ENCODE measurements at regions of chr19 and their contacts with region 1.

Region 1: DNA sequence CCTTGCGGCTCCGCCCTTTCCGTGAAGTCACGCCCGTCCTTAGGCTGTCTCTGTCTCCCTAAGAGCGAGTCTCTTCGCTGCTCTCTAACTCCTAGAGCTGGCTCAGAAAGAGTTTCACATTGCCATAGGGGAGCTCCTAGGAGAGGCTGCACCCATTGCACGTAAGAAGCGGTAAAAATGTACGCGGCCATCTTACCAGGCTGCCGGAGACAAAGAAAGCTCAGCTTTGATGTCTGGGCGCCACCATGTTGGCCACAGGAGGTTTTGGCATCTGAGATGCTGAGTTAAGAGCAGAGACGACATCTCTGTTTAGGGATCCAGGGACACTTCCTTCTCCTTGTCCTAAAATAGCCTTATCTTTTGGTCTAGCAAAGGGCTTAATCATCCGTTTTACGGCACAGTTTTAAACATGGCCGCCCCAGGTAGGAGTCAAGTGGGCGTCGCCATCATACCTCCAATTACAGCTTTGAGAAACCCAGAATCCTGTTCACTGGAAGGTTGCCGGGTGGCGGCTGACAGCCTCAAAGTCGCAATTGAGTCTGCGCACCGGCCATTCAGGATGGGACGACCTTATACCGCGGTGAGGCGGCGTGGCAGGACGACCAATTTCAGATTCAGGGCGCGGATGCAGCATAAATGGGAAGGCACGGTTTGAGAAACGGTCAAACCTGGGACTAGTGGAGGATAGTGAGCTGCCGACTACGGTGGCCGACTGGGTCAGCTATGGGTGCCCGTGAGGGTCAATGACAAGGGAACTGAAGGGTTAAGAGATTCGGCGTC is at the start of gene ZNF793:
- DNase-seq: peak; percentile 87
- ATAC-seq: peak; percentile 90
- H3K4me3 Mint-ChIP-seq: no peak within 1 kb of the TSS
- H3K27ac Mint-ChIP-seq: no peak within 1 kb of the TSS
- H3K4me1 Mint-ChIP-seq: no peaks in the 10 kb centered on the region
- H3K27me3 Mint-ChIP-seq: no peaks in the 10 kb centered on the region
- total RNA-seq, gene ZNF793: 2.7 to 6.1 TPM

Region 2: GRCh38 chr19:37160153-37160552 is 346.4 kb before region 1 on chr19:
- CTCF ChIA-PET with region 1: no interaction called
- DNase-seq: no peak
- ATAC-seq: no peak
- H3K4me3 Mint-ChIP-seq: no peak overlapping the region
- H3K27ac Mint-ChIP-seq: no peak overlapping the region
- H3K4me1 Mint-ChIP-seq: no peaks in the 10 kb centered on the region
- H3K27me3 Mint-ChIP-seq: no peaks in the 10 kb centered on the region

Region 3: GRCh38 chr19:37551129-37551993 is 44.8 kb after region 1 on chr19:
- CTCF ChIA-PET with region 1: interaction called, 10 read pairs
- DNase-seq: peak; percentile 86
- ATAC-seq: peak; percentile 88
- H3K4me3 Mint-ChIP-seq: peak overlapping the region; percentile 91
- H3K27ac Mint-ChIP-seq: peak overlapping the region; percentile 94
- H3K4me1 Mint-ChIP-seq: peaks cover 8% of the 10 kb centered on the region
- H3K27me3 Mint-ChIP-seq: no peaks in the 10 kb centered on the region